Caco-2 (cell line): ENCODE measurements at regions of chr6 and their contacts with region 1.

Region 1: GRCh38 chr6:30759575-30760239 is 15.4 kb upstream of the IER3 start:
- DNase-seq: peak; percentile 65 to 66
- H3K4me3 ChIP-seq: no peak overlapping the region
- H3K4me3 Mint-ChIP-seq: no peak overlapping the region
- H3K27ac Mint-ChIP-seq: peak overlapping the region; percentile 75
- H3K4me1 ChIP-seq: peaks cover 39% of the 10 kb centered on the region
- H3K4me1 Mint-ChIP-seq: peaks cover 34% of the 10 kb centered on the region
- H3K27me3 ChIP-seq: no peaks in the 10 kb centered on the region
- H3K27me3 Mint-ChIP-seq: no peaks in the 10 kb centered on the region
- CTCF ChIP-seq: no peak

Region 2: GRCh38 chr6:30814136-30815040 is 54.7 kb after region 1 on chr6:
- CTCF ChIA-PET with region 1: interaction called, 3 read pairs
- POLR2A ChIA-PET with region 1: interaction called, 3 read pairs
- intact Hi-C with region 1: loop called (anchors 5 kb)
- DNase-seq: no peak
- H3K4me3 ChIP-seq: no peak overlapping the region
- H3K4me3 Mint-ChIP-seq: no peak overlapping the region
- H3K27ac Mint-ChIP-seq: no peak overlapping the region
- H3K4me1 ChIP-seq: peaks cover 12% of the 10 kb centered on the region
- H3K4me1 Mint-ChIP-seq: peaks cover 28% of the 10 kb centered on the region
- H3K27me3 ChIP-seq: no peaks in the 10 kb centered on the region
- H3K27me3 Mint-ChIP-seq: no peaks in the 10 kb centered on the region
- CTCF ChIP-seq: no peak

Region 3: DNA sequence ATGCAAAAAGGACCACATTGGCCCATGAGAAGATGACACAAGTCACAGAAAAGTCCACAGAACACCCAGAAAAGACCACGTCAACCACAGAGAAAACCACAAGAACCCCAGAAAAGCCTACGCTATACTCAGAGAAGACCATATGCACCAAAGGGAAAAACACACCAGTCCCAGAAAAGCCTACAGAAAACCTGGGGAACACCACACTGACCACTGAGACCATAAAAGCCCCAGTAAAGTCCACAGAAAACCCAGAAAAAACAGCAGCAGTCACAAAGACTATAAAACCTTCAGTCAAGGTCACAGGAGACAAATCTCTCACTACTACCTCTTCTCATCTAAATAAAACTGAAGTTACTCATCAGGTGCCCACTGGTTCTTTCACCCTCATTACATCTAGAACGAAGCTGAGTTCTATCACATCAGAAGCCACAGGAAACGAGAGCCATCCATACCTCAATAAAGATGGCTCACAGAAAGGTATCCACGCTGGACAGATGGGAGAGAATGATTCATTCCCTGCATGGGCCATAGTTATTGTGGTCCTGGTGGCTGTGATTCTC is 192.3 kb after region 1 on chr6:
- CTCF ChIA-PET with region 1: no interaction called
- POLR2A ChIA-PET with region 1: no interaction called
- intact Hi-C with region 1: no loop called
- DNase-seq: no peak
- H3K4me3 ChIP-seq: no peak overlapping the region
- H3K4me3 Mint-ChIP-seq: no peak overlapping the region
- H3K27ac Mint-ChIP-seq: no peak overlapping the region
- H3K4me1 ChIP-seq: 0 out of 2 replicates have a peak, but pooled peaks cover 4% of the 10 kb centered on the region
- H3K4me1 Mint-ChIP-seq: no peaks in the 10 kb centered on the region
- H3K27me3 ChIP-seq: no peaks in the 10 kb centered on the region
- H3K27me3 Mint-ChIP-seq: no peaks in the 10 kb centered on the region
- CTCF ChIP-seq: no peak